Activated T-helper 1 cell treated with anti-CD3 and anti-CD28 coated beads, Interleukin-12 subunit alpha, Interleukin-12 subunit beta, Interleukin-2, Interleukin-4 antibody, amounts not matched to agents 30 ng/mL and 10 ng/mL and 1 ng/mL, durations not matched to agents 14 hours and 24 hours and 36 hours (primary cell): ENCODE measurements at regions of chr11 and their contacts with region 1.

Region 1: DNA sequence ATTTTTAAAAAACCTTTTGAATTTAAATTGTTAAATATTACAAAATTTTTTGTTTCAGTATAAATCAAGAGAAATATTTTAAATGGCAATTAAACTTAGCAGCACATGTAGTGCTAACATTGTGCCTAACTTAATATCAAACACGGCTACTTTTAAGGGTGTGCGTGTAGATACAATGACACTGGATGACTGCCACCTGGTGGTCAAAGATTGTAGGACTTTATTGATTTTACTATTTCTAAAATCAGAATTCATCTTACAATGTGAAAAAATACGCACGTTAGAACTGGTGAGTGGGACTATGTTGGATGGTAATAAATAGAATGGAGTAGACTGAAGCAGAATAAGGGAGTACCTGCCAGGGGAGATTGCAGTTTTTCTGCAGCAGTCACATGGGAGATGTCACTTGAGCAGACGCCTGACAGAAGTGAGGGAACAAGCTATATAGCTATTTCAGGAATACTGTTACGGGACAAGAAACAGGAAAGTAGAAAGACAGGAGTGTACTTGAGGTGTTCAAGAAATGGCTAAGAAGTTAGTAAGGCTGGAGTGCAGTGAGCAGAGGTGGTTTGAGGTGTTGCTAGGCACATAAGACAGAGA is 52.9 kb downstream of the UVRAG start:
- DNase-seq: peak; percentile 24
- H3K4me3 Mint-ChIP-seq: no peak overlapping the region
- H3K27ac Mint-ChIP-seq: no peak overlapping the region
- H3K4me1 Mint-ChIP-seq: peaks cover 9% of the 10 kb centered on the region
- H3K27me3 Mint-ChIP-seq: no peaks in the 10 kb centered on the region

Region 2: DNA sequence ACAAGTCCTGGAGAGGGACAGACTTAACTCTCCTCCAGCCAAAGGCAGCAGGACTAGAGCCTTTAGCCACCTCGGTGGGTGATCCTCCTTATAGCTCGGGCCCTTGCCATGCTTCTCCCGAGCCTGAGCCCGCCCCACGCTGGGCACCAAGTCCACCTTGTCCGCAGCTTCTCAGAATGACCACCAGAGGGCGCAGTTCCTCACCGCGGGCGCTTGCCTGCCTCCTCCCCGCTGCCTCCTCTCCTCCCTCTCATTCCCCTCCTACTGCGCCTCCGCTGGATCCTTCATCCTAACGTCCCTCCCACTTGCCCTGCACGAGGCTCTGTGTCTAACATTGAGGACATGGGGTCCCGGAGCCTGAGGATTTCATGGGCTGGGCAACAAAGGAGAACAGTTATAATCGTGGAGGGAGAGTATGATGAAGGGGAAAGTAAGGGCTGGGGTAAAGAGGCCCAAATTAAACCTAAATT is 161.6 kb before region 1 on chr11:
- intact Hi-C with region 1: loop called (anchors 1 kb)
- DNase-seq: peak; percentile 48
- H3K4me3 Mint-ChIP-seq: no peak overlapping the region
- H3K27ac Mint-ChIP-seq: no peak overlapping the region
- H3K4me1 Mint-ChIP-seq: peaks cover 8% of the 10 kb centered on the region
- H3K27me3 Mint-ChIP-seq: peaks cover 23% of the 10 kb centered on the region

Region 3: DNA sequence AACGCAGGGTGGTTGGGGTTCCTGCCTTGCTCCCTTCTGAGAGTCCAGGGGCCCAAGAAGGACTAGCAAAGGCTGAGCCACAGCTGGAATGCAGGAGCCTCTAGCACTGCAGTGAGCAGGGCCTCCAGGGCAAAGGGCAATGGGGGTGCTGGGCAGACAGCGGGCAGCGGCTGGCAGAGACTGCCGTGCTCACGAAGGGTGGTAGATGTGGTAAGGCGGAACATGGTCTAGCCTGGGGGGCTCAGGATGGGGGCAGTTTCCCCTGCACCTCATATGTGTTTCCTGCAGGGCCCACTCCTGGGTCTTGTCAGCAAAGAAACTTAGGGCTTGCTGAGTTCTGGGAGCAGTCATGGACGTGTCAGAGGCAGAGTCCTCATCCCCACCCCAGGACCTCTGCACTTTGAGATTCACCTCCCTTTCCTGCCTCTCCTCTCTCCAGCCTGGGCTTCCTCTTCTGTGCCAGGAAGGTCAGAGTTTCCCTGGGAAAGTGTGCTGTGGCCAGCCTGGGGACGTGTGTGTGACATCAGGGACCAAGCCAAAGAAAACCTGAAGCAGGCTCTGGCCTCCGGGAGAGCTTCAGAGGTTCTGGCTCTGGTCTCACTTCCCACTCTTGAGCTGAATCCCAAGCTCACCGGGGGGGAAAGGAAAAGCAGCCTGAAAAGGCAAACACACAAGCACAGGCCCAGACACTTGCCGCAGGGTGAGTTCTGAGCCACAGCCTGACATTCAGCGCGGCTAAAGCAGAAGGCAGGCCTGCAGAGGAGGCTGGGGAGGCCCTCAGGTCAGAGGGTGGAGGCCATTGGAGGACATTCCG is 145.8 kb before region 1 on chr11:
- intact Hi-C with region 1: loop called (anchors 1 kb)
- DNase-seq: no peak
- H3K4me3 Mint-ChIP-seq: no peak overlapping the region
- H3K27ac Mint-ChIP-seq: no peak overlapping the region
- H3K4me1 Mint-ChIP-seq: no peaks in the 10 kb centered on the region
- H3K27me3 Mint-ChIP-seq: peaks cover 2% of the 10 kb centered on the region

Region 4: DNA sequence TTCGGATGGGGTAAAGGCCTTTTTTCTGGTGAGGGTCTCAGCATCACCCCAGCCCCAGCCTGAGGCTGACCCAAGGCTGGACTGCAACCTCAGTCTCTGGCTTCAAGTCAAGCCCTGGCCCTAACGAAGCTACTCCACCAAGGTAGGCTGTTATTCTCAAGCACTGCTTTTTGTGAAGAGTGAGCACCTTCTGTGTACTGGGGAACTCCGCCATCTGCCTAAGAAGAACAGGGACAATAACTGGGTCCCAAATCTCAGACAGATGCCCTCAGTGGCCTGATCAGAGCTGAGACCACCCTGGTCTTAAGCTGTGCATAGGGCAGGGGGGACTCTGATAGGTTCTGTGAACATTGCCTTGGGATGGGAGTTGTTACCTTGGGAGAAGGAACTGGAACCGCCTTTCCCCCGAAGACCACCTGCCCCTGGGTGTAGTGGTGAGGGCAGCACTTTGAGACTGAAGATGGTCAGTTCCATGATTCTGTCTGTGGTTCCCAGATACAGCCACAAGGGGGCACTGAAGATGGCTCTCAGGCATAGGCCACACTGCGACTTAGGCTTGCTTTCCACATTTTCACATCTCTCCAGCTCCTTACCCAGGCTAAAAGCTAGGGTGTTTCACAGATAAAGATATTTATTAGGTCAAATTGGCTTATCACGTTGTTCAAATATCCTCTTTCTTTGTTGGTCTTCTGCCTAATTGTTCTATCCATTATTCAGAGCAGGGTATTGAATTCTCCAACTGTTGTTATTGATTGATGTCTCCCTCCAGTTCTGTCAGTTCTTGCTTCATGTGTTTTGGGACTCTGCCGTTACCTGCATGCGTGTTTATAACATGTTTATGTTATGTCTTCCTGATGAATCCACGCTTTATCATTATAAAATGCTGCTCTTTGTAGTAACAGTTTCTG is 64.7 kb before region 1 on chr11:
- intact Hi-C with region 1: loop called (anchors 1 kb)
- DNase-seq: peak; percentile 56
- H3K4me3 Mint-ChIP-seq: no peak overlapping the region
- H3K27ac Mint-ChIP-seq: no peak overlapping the region
- H3K4me1 Mint-ChIP-seq: peaks cover 14% of the 10 kb centered on the region
- H3K27me3 Mint-ChIP-seq: peaks cover 2% of the 10 kb centered on the region